RWPE1 (cell line): ENCODE measurements at regions of chr1 and their contacts with region 1.

Region 1: DNA sequence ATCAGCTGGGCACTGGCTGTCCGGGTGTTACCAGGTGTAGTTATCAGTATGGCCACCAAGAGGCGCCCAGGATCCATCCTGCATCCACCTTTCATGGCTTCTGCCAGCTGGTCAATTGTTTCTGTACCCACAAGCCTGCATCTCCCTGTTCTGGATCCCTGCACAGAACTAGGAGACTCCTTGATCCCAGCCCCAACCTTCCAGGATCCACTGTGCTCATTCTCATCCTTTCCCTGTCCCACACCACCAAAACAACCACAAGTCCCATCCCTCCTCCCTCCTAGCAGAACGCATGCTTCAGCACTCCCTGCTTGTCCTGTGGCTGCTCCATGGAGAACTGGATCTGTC is 27.2 kb upstream of the FOXE3 start:
- DNase-seq: peak; percentile 78
- H3K27ac ChIP-seq: no peak overlapping the region
- CTCF ChIP-seq: peak; percentile 63

Region 2: GRCh38 chr1:47424336-47424982 is 35.6 kb after region 1 on chr1:
- CTCF ChIA-PET with region 1: interaction called, 22 read pairs
- POLR2A ChIA-PET with region 1: no interaction called
- DNase-seq: peak; percentile 73
- H3K27ac ChIP-seq: no peak overlapping the region
- CTCF ChIP-seq: peak; percentile 75

Region 3: DNA sequence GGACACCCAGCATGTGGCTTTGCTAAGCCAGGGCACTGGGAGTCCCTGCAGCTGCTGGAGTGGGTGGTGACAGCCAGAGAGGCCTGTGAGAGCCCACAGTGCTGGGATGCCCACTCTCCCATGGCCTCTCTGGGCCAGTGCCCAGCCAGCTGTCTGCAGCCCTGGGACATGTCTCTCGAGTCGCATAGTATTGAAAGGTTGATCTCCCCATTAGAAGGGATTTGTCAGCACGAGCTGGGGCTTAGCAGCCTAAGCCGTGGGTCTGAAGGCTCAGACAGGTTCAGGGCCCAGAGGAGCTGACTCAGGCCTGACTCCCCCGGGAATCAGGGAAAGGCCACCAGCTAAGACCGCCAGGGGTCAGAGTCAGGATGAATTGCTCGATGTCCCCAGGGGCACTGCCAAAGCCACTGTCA is 102.5 kb after region 1 on chr1:
- CTCF ChIA-PET with region 1: no interaction called
- POLR2A ChIA-PET with region 1: no interaction called
- DNase-seq: no peak
- H3K27ac ChIP-seq: no peak overlapping the region
- CTCF ChIP-seq: no peak

Region 4: DNA sequence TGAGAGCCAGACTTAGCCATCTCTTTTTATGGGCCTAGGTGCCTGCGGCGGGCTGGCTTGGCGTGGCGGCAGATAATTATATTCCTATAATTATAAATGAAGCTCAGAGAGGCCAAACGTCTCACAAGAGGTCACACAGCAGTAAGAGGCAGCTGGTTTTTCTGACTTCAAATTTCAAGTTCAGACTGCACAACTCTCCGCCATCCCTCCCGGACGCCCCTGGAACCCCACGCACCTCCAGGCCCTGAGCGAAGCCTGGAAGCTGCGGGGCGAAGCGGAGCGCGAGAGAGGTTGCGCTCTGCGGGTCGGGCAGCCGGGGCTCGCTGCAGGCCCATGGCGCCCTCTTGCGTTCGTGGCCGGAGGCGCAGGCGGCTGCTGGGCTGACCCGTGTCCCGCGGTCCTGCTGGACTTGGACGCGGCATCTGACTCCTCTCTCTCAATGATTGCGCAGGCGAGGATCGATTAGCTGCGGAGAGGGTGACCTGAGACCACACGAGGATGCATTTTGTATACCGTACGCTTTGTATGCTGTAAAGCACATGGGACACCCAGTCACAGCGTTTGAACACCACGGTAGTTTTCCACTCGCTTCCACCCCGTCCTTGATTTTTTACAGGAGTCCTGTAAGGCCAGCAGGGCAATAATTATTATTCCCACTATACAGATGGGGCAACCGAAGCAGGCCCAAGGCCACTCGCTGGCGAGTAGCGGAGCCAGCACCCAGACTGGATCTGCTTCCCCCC is 321.6 kb after region 1 on chr1:
- CTCF ChIA-PET with region 1: interaction called, 15 read pairs
- POLR2A ChIA-PET with region 1: no interaction called
- DNase-seq: peak; percentile 88
- H3K27ac ChIP-seq: no peak overlapping the region
- CTCF ChIP-seq: peak; percentile 96

Region 5: GRCh38 chr1:47725992-47726855 is 337.4 kb after region 1 on chr1:
- CTCF ChIA-PET with region 1: interaction called, 11 read pairs
- POLR2A ChIA-PET with region 1: no interaction called
- DNase-seq: peak; percentile 80
- H3K27ac ChIP-seq: no peak overlapping the region
- CTCF ChIP-seq: peak; percentile 94